ENCODE measurements at regions of chr19 and their contacts with region 1.

Region 1: GRCh38 chr19:10251792-10252694 is at the start of gene MRPL4:
- DNase-seq: peak; percentile 90
- H3K4me3 ChIP-seq: peak within 1 kb of the TSS; percentile 99
- CTCF ChIP-seq: no peak

Region 2: DNA sequence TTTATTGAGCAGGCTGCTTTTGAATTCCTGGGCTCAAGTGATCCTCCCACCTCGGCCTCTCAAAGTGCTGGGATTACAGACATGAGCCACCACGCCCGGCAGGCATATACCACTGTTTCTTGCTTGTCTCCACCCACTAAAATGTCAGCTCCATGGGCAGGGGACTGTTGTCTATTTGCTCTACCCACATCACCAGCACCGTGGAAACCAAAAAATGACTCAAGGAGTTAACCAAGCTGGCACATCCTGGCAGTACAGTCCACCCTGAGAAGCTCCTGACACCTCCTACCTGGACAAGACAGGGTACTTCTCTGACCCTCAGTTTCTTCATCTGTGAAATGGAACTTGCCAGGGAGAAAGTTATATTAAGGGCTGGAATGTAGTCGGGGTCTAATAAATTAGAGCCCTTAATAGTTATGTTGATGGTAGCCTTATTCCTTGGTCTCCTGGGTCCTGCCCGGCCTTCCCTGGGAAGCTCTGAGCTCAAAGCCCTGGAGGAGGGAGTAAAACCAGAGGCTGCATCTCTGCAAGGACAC is 224.8 kb before region 1 on chr19:
- CTCF ChIA-PET with region 1: interaction called, 15 read pairs
- POLR2A ChIA-PET with region 1: no interaction called
- DNase-seq: no peak
- H3K4me3 ChIP-seq: no peak overlapping the region
- CTCF ChIP-seq: no peak

Region 3: DNA sequence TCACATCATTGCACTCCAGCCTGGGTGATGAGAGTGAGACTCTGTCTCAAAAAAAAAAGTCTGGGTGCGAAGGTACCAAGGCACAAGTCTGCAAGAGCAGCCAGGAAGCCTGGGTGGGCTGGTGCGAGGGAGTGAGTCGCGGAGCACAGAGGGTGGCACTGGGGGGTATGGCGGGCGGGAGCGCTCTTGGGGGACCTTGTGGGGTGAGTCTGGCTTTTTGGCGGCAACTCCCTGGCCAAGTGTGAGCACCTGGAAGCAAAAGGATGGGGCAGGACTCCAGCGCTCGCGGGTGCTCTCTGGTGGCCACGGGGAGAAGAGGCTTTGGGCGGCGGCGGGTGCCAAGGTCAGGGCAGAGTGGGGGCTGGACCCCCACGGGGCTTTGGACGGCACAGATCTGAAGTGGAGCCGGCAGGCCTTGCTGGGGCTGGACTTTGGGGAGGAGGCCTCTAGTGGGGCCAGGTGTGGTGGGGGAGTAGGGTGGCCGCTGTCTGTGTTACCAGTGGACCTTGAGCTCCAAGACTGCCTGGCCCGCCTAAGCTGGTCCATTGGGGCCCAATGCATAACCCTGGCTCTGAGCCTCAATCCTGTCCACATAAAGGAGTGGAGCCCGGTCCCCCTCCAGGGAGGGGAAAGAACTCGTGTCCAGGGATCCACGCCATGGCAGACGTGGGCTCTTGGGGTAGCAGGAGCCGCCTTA is 139.0 kb before region 1 on chr19:
- CTCF ChIA-PET with region 1: interaction called, 19 read pairs
- POLR2A ChIA-PET with region 1: interaction called, 5 read pairs
- DNase-seq: no peak
- H3K4me3 ChIP-seq: no peak overlapping the region
- CTCF ChIP-seq: peak; percentile 81

Region 4: GRCh38 chr19:10191347-10191746 is 60.7 kb before region 1 on chr19:
- CTCF ChIA-PET with region 1: interaction called, 11 read pairs
- POLR2A ChIA-PET with region 1: no interaction called
- DNase-seq: peak; percentile 76
- H3K4me3 ChIP-seq: no peak overlapping the region
- CTCF ChIP-seq: no peak

Region 5: DNA sequence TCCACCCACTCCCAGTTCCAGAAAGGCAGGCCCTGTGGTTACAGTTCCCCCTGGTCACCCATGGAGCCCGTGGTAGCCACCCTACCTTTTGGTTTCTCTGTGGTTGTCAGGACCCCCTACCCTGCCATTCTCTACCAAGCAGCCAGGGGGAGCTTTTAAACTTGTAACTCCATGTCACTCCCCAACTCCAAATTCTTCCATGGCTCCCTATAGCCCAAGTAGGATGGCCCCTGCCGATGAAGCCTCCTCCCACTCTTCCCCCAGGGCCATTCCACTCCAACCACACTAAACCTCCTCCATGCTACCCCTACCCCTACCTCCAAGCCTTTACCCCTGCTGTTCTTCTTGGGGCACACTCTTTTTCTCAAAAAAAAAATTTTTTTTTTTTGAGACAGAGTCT is 23.1 kb before region 1 on chr19:
- CTCF ChIA-PET with region 1: interaction called, 17 read pairs
- POLR2A ChIA-PET with region 1: no interaction called
- DNase-seq: no peak
- H3K4me3 ChIP-seq: no peak overlapping the region
- CTCF ChIP-seq: peak; percentile 12

Region 6: DNA sequence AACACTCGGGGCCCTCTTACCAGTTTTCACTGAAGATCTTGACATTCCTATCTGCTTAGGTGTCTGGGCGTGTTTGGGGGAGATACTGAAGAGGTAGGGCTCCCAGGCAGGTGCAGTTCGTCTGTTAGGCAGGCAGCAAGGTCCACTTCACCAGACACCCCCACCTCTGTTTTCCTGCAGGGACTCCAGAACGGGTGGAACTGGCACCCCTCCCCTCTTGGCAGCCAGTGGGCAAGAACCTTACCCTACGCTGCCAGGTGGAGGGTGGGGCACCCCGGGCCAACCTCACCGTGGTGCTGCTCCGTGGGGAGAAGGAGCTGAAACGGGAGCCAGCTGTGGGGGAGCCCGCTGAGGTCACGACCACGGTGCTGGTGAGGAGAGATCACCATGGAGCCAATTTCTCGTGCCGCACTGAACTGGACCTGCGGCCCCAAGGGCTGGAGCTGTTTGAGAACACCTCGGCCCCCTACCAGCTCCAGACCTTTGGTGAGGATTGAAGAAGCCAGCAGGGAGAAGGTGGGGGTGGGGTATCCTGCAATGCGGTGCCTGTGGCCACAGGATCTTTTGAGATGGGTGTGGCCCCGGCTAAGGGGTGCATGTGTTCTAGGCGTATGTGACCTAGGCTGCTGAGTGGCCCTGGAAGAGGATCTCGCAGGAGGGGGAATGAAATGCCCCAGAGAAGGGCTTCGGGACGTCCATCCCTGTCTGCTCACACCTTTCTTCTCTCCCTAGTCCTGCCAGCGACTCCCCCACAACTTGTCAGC is 31.4 kb after region 1 on chr19:
- CTCF ChIA-PET with region 1: no interaction called
- POLR2A ChIA-PET with region 1: no interaction called
- DNase-seq: no peak
- H3K4me3 ChIP-seq: no peak overlapping the region
- CTCF ChIP-seq: no peak

Region 7: DNA sequence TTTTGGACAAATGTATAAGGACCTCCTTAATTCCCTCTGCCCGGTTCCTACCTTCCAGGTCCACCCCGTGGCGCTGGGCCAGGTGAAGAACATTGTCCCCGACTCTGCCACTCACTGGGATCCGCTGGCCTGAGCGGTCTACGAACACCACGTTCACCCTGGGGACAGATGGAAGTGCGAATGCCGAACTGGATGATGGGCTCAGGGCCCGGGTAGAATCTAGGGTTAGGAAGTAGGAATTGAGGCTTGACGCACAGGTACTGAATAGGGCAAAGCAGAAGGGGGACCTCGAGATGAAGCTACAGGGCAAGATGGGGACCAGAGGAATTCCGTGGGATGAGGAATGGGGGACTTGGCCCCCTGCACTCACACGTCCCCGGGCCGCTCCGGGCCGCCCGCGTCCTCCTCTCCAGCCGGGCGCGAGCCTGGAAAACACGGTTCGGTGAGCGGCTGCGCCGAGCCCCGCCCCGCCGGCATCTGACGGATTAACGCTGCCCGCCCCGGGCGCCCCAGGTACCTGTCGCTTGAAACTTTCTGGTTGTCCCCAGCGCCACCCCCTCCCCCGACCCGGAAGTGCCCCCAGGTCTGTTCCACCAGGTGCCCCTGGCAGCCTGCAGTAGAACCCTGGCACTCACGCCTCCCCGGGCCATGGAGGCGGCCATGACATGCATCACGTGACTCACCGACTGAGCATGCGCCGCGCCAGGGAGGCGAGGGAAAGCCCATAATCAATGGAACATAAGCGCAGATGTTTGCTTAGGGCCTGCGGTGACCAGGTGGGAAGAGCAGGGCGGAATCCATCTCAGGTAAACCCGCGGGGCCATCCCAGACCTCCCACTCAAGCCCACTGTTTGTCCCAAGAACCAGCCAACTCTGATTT is 63.5 kb after region 1 on chr19 and contains the start of gene FDX2:
- CTCF ChIA-PET with region 1: no interaction called
- POLR2A ChIA-PET with region 1: no interaction called
- DNase-seq: no peak
- H3K4me3 ChIP-seq: peak within 1 kb of the TSS; percentile 80
- CTCF ChIP-seq: no peak

Region 8: DNA sequence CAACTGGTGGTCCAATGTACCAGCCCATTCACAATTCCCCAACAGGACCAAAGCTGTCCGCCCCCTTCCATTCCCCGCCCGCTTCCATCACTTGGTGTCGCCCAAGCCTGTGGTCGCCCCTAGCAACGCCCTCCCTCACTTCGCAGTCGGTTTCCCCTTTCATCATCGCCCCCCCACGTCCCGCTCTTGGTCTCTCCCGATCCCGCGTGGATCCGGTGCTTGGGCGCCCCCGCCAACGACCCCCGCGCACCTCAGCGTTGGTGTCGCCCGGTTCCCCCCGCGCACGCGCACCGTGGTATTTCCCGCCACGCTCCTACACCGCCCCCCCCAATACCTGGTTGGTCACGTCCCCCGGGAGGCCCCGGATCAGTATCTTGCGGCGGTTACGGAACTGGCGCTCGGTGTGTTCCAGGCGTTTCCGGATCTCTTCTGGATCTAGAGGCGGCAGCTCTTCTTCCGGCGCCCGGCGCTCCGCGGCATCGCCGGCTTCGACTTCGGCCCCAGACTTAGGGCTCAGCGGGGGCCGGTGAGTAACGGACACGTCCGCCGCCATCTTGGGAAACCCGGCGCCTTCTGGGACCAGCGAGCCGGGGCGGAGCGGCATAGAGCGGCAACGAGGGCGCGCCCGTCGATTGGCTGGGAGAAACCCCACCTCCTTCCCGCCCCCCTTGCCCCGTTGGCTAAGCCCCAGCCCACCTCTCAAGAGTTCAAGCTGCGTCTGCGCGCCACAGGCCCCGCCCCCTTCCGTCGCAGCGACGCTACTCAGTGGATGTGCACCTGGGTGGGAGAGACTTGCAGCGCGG is 81.1 kb after region 1 on chr19 and contains the start of gene RAVER1:
- CTCF ChIA-PET with region 1: no interaction called
- POLR2A ChIA-PET with region 1: no interaction called
- DNase-seq: peak; percentile 67
- H3K4me3 ChIP-seq: peak within 1 kb of the TSS; percentile 87
- CTCF ChIP-seq: no peak